H1 (cell line): ENCODE measurements at regions of chr1 and their contacts with region 1.

Region 1: DNA sequence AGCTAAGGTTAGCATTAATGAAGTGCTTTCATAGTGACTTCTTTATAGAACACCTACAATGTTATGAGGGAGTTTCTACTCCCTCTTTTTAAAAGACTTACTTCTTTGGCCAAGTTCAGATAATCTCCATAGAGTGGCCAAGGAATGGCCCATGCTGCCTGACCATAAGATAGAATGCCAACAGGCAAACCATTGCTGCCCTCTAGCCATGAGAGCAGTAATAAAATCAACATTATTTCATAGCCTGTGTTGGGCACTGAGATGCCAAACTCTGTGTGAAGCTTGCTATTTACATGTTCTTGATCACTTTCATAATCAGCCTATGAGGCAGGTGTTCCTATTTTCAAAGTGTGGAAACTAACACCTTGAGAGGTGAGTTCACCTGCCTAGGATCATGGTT is 132.1 kb downstream of the ZNF648 start:
- DNase-seq: no peak
- H3K4me3 ChIP-seq: no peak overlapping the region
- H3K27ac ChIP-seq: no peak overlapping the region
- H3K4me1 ChIP-seq: peaks cover 0 to 3% (median 0%) of the 10 kb centered on the region in 4 experiments; a peak in 1 of 7 replicates
- H3K27me3 ChIP-seq: no peaks in the 10 kb centered on the region
- CTCF ChIP-seq: no peak
- EP300 ChIP-seq: no peak
- POLR2A ChIP-seq: no peak
- RAD21 ChIP-seq: peak; percentile 22 to 47; a peak in 3 of 4 replicates

Region 2: GRCh38 chr1:181918880-181919525 is 10.4 kb before region 1 on chr1:
- CTCF ChIA-PET with region 1: interaction called, 14 read pairs
- POLR2A ChIA-PET with region 1: no interaction called
- DNase-seq: peak in 1 of 2 experiments; percentile 49
- H3K4me3 ChIP-seq: no peak overlapping the region
- H3K27ac ChIP-seq: no peak overlapping the region
- H3K4me1 ChIP-seq: peaks cover 0 to 3% (median 1%) of the 10 kb centered on the region in 4 experiments; a peak in 4 of 7 replicates
- H3K27me3 ChIP-seq: no peaks in the 10 kb centered on the region
- CTCF ChIP-seq: no peak
- EP300 ChIP-seq: no peak
- POLR2A ChIP-seq: no peak
- RAD21 ChIP-seq: no peak